Activated CD4-positive, alpha-beta T cell treated with anti-CD3 and anti-CD28 coated beads, Interleukin-2, amount 10 ng/mL, durations not matched to agents 24 days and 14 days (primary cell): ENCODE measurements at regions of chr9 and their contacts with region 1.

Region 1: DNA sequence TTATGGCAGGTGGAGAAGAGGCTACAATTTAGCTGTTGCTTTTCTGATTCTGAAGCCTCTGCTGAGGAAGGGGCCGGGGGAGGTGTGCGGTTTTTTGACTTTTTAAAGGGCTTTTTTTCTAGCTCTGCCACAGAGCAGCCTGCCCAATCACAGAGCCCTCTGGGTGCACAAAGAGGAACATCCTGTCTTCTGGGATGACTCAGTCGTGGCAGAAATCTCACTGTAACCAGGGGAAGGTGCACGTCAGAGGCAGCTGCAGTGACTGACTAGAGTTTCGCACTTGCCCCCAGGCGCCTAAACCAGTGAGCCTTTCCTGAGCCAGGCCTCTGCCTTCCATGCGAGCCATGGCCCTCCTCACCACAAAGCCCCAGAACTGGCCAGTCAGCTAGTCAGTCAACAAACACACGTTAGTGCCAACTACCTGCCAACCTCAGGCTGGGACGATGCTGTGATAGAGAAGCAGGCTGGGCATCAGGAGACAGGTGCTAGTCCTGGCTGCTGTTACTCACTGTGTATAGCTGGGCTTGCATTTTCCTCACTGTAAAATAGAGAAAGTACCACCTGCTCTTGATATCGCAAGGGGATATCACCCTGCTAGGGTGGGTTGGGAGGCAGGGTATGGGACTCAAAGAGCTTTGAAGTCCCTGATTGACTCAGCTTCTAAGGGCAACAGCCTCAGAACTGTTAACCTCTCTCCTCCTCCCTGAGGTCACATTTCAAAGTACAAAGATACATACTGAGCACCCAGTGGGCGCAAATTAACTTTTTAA is 2.2 kb downstream of the AKNA start:
- DNase-seq: peak; percentile 97
- H3K4me3 Mint-ChIP-seq: peak overlapping the region; percentile 96
- H3K27ac Mint-ChIP-seq: peak overlapping the region; percentile 93
- H3K4me1 Mint-ChIP-seq: peaks cover 61% of the 10 kb centered on the region
- H3K27me3 Mint-ChIP-seq: no peaks in the 10 kb centered on the region

Region 2: GRCh38 chr9:113993838-113994540 is 391.6 kb before region 1 on chr9:
- intact Hi-C with region 1: no loop called
- DNase-seq: no peak
- H3K4me3 Mint-ChIP-seq: no peak overlapping the region
- H3K27ac Mint-ChIP-seq: no peak overlapping the region
- H3K4me1 Mint-ChIP-seq: peaks cover 3% of the 10 kb centered on the region
- H3K27me3 Mint-ChIP-seq: peaks cover 5% of the 10 kb centered on the region

Region 3: GRCh38 chr9:114155263-114155972 is 230.2 kb before region 1 on chr9 and contains the start of gene COL27A1:
- intact Hi-C with region 1: loop called (anchors 10 kb)
- DNase-seq: peak; percentile 95
- H3K4me3 Mint-ChIP-seq: peak within 1 kb of the TSS; percentile 98
- H3K27ac Mint-ChIP-seq: peak within 1 kb of the TSS; percentile 92
- H3K4me1 Mint-ChIP-seq: peaks cover 16% of the 10 kb centered on the region
- H3K27me3 Mint-ChIP-seq: peaks cover 43% of the 10 kb centered on the region
- total RNA-seq, gene COL27A1: 8.5 and 9.7 TPM in 2 replicates

Region 4: DNA sequence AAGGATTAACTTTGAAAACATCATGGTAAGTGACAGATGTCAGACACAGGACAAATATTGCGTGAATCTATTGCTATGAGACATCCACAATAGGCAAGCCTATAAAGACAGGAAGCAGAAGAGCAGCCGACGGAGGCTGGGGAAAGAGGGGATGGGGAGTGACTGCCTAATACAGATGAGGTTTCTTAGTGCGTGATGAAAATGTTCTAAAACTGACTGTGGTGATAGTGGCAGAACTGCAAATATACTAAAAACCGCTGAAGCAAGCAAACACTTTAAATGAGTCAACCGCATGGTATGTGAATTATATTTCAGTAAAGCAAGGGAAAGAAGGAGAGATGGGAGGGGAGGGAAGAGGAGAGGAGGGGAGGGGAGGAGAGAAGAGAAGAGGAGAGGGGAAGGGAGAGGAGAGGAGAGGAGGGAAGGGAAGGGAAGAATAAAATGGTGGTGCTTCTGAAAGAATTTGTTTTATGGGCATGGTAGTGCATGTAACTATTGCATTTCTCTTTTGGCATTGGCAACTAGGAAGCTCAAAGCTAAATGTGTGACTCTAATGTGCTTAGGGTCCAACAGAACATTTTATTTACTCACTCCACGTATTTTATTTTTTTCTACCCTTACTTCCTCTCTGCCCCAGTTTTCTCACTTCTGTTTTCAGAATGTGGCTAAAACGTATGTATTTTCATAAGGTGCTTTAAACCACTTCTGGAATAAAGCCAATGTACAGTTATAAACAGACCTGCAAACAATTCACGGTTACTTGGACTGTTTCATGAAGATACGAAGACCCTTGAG is 19.1 kb before region 1 on chr9:
- intact Hi-C with region 1: loop called (anchors 1 kb)
- DNase-seq: peak; percentile 80
- H3K4me3 Mint-ChIP-seq: peak overlapping the region; percentile 59
- H3K27ac Mint-ChIP-seq: peak overlapping the region; percentile 87
- H3K4me1 Mint-ChIP-seq: peaks cover 67% of the 10 kb centered on the region
- H3K27me3 Mint-ChIP-seq: no peaks in the 10 kb centered on the region

Region 5: GRCh38 chr9:114587385-114588202 is 202.0 kb after region 1 on chr9 and contains the start of gene ATP6V1G1:
- intact Hi-C with region 1: loop called (anchors 1 kb)
- DNase-seq: peak; percentile 100
- H3K4me3 Mint-ChIP-seq: peak within 1 kb of the TSS; percentile 98
- H3K27ac Mint-ChIP-seq: peak within 1 kb of the TSS; percentile 99
- H3K4me1 Mint-ChIP-seq: peaks cover 43% of the 10 kb centered on the region
- H3K27me3 Mint-ChIP-seq: peaks cover 4% of the 10 kb centered on the region
- total RNA-seq, gene ATP6V1G1: 46.7 and 47.1 TPM in 2 replicates

Region 6: DNA sequence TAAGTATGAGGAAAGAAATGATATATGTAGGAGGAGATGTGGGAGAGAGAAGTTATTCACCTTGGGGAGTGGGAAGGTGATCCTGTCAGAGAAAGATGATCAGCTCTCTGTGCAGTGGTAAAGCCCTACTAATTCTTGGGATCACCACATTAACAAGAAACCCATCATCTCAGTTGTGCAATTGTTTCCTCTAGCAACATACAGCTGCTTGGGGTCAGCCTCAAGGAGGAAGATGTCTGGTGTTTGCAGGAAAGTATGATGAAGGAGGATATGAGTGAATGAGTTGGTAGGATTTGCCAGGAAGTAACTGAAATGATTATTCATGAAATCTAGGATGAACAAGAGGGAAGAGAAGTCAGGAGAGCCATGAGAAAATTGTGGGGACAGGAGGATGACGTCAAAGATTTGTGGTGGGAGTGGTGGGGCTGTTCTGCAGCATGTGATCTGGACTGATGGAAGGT is 494.7 kb after region 1 on chr9:
- intact Hi-C with region 1: no loop called
- DNase-seq: no peak
- H3K4me3 Mint-ChIP-seq: no peak overlapping the region
- H3K27ac Mint-ChIP-seq: no peak overlapping the region
- H3K4me1 Mint-ChIP-seq: no peaks in the 10 kb centered on the region
- H3K27me3 Mint-ChIP-seq: no peaks in the 10 kb centered on the region

Region 7: DNA sequence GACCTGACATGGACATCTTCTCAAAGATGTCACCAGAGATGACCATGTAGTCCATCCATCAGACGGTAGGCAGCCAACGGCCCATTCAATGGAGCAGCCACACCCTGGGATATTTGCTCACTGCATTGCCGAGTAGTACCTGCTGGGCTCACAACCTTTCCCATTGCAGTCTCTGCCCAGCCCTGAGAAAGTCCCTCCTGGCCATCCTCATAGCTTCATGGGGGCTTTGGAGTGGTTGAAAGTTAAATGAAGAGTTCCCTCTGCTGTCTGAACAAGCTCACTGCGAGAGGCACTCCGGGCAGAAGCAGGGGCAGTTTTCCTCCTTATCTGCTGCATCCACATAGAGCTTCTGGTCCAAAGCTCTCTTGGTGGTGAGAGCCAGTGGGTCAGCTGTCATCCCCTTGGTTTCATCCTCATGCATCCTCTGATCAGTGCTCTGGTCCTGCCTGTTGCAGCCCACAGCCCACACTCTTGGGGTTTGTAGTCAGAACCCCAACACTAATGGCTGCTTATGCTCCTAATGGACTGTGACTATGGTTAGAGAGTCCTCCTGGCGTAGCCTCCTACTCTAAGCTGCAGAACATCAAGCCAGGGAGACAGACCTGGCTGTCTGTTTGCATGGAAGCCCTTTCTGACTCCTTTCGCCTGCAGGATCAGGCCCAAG is 521.4 kb after region 1 on chr9:
- intact Hi-C with region 1: loop called (anchors 5 kb)
- DNase-seq: peak; percentile 78
- H3K4me3 Mint-ChIP-seq: peak overlapping the region; percentile 65
- H3K27ac Mint-ChIP-seq: peak overlapping the region; percentile 94
- H3K4me1 Mint-ChIP-seq: peaks cover 92% of the 10 kb centered on the region
- H3K27me3 Mint-ChIP-seq: no peaks in the 10 kb centered on the region